HepG2 (cell line): ENCODE measurements at regions of chr11 and their contacts with region 1.

Region 1: GRCh38 chr11:108724974-108725689 is 60.3 kb downstream of the DDX10 start:
- DNase-seq: no peak
- ATAC-seq: no peak
- H3K4me3 ChIP-seq: no peak overlapping the region
- H3K27ac ChIP-seq: no peak overlapping the region
- H3K4me1 ChIP-seq: no peaks in the 10 kb centered on the region
- H3K27me3 ChIP-seq: no peaks in the 10 kb centered on the region
- CTCF ChIP-seq: no peak
- EP300 ChIP-seq: no peak
- POLR2A ChIP-seq: no peak
- RAD21 ChIP-seq: no peak

Region 2: DNA sequence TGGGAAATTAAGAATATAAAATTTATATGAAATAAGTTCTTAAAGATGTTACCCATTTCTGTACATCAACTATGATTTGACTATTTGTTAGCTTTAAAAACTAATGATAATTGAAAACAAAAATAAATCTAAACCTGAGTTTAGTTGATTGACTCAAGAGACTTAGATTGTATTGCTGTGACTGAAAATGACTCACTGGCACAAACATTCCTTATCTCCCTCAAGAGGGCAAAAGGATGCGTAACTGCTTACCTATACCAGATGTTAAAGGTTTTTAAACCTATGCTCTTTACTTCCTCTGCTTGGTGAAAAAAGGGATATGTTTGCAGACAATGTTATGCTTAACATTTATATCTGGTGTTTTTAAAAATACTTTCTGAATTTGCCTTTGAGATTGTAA is 472.0 kb before region 1 on chr11:
- CTCF ChIA-PET with region 1: no interaction called
- POLR2A ChIA-PET with region 1: no interaction called
- in situ Hi-C with region 1: no loop called
- intact Hi-C with region 1: loop called (anchors 5 kb)
- DNase-seq: no peak
- ATAC-seq: no peak
- H3K4me3 ChIP-seq: no peak overlapping the region
- H3K27ac ChIP-seq: no peak overlapping the region
- H3K4me1 ChIP-seq: no peaks in the 10 kb centered on the region
- H3K27me3 ChIP-seq: no peaks in the 10 kb centered on the region
- CTCF ChIP-seq: no peak
- EP300 ChIP-seq: no peak
- POLR2A ChIP-seq: no peak
- RAD21 ChIP-seq: no peak

Region 3: DNA sequence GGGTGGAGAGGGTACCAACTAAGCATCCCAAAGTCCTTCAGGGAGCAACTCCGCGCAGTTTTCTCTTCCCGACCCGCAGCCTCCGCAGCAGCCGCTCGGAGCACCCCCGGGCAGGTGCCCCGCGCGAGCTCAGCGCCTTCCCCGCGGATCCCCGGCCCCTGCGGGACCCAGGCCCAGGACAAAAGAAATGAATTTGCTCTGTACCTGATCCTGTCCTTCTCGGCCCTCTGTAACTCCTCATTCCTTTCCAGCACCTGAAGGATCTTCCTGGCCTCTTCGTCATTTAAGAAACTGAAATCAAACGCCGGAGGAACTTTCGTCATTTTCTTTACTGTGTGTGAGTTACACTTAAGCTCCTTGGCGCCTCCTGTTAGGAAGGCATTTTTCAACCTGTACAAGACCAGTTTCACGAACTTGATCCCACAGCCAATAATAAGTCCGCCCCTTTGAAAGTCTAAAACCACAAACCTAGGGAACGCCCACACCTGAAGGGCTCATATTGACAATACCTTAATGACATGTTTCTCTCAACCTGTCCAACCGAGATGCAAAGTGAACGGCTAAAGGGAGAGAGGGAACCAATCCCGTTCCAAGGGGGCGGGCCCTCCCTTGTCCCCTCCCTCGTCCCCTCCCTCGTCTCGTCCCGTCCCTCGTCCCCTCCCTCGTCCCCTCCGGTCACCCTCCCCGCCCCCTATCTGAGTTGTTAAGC is 131.8 kb before region 1 on chr11 and contains the start of gene EXPH5:
- CTCF ChIA-PET with region 1: no interaction called
- POLR2A ChIA-PET with region 1: no interaction called
- in situ Hi-C with region 1: no loop called
- intact Hi-C with region 1: no loop called
- DNase-seq: peak; percentile 83
- ATAC-seq: peak; percentile 95
- H3K4me3 ChIP-seq: peak within 1 kb of the TSS; percentile 56 to 69 (median 57)
- H3K27ac ChIP-seq: no peak within 1 kb of the TSS
- H3K4me1 ChIP-seq: peaks cover 10% of the 10 kb centered on the region
- H3K27me3 ChIP-seq: peaks cover 2 to 18% of the 10 kb centered on the region in 2 experiments; a peak in 4 of 5 replicates
- CTCF ChIP-seq: no peak
- EP300 ChIP-seq: no peak
- POLR2A ChIP-seq: no peak
- RAD21 ChIP-seq: no peak
- total RNA-seq, gene EXPH5: 0.02 and 0.15 TPM in 2 replicates